ENCODE measurements at regions of chr16 and their contacts with region 1.

Region 1: DNA sequence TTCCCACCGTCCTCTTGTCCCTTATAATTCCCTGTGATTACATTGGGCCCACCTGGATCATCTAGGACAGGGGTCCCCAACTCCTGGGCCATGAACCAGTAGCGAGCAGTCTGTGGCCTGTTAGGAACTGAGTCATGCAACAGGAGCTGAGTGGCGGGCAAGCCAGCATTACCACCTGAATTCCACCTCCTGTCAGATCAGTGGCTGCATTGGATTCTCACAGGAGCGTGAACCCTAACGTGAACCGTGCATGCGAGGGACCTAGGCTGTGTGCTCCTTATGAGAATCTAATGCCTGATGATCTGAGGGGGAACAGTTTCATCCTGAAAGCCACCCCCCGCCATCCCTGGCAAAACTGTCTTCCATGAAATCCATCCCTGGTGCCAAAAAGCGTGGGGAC is 36.8 kb downstream of the ABCC1 start:
- DNase-seq: no peak
- H3K4me3 Mint-ChIP-seq: no peak overlapping the region
- H3K27ac Mint-ChIP-seq: no peak overlapping the region
- H3K4me1 Mint-ChIP-seq: peaks cover 16% of the 10 kb centered on the region
- H3K27me3 Mint-ChIP-seq: no peaks in the 10 kb centered on the region
- CTCF ChIP-seq: no peak

Region 2: GRCh38 chr16:16045879-16046278 is 59.6 kb after region 1 on chr16:
- CTCF ChIA-PET with region 1: interaction called, 17 read pairs
- intact Hi-C with region 1: no loop called
- DNase-seq: no peak
- H3K4me3 Mint-ChIP-seq: no peak overlapping the region
- H3K27ac Mint-ChIP-seq: no peak overlapping the region
- H3K4me1 Mint-ChIP-seq: peaks cover 9% of the 10 kb centered on the region
- H3K27me3 Mint-ChIP-seq: no peaks in the 10 kb centered on the region
- CTCF ChIP-seq: peak; percentile 42